Colonic mucosa (tissue), 4 donors: ENCODE measurements at regions of chr17 and their contacts with region 1.

Region 1: DNA sequence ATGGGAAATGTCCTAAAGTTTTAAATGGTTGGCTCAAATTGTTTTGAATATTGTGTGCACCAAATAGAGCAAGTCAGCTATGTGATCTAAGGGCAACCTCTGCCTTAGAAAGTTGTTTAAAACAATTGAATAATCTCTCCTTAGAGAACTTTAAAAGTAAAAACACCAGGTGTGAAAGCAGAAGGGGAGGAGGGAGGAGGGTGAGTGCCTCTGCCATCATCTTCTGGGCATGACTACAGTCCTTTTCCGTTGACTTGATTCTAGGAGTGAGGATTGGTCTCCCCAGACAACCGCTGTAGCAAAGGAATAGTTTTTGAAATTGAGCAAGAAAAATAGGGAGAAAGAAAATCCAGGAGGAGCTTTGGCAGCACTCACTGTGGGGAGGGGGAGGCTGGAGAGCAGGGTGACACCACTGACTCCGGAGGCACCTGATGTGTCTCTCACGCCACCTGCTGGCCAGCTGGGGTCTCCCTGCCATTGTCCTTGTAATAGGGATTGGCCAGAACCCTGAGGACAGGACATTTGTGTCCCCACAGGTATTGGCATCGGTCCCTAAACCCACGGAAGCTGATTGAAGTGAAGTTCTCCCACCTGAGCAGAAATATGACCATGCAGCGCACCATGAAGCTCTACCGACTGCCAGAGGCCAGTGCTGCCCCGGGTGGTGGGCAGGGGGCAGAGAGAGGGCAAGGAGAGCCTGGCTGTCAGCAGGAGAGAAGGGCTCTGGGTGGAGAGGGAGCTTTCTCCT is 33.3 kb downstream of the PLCD3 start:
- DNase-seq: peak; percentile 89
- H3K4me3 ChIP-seq: no peak overlapping the region
- H3K27ac ChIP-seq: no peak overlapping the region
- H3K4me1 ChIP-seq: no peaks in the 10 kb centered on the region
- H3K27me3 ChIP-seq: no peaks in the 10 kb centered on the region
- CTCF ChIP-seq: peak; percentile 85

Region 2: GRCh38 chr17:44919885-44920564 is 179.0 kb before region 1 on chr17:
- intact Hi-C with region 1: loop called (anchors 2 kb)
- DNase-seq: peak; percentile 74
- H3K4me3 ChIP-seq: no peak overlapping the region
- H3K27ac ChIP-seq: no peak overlapping the region
- H3K4me1 ChIP-seq: no peaks in the 10 kb centered on the region
- H3K27me3 ChIP-seq: no peaks in the 10 kb centered on the region
- CTCF ChIP-seq: peak; percentile 78

Region 3: GRCh38 chr17:45021607-45022287 is 77.3 kb before region 1 on chr17:
- intact Hi-C with region 1: loop called (anchors 5 kb)
- DNase-seq: peak; percentile 54
- H3K4me3 ChIP-seq: peak overlapping the region; percentile 38
- H3K27ac ChIP-seq: peak overlapping the region; percentile 35
- H3K4me1 ChIP-seq: peaks cover 3% of the 10 kb centered on the region
- H3K27me3 ChIP-seq: no peaks in the 10 kb centered on the region
- CTCF ChIP-seq: peak; percentile 92

Region 4: DNA sequence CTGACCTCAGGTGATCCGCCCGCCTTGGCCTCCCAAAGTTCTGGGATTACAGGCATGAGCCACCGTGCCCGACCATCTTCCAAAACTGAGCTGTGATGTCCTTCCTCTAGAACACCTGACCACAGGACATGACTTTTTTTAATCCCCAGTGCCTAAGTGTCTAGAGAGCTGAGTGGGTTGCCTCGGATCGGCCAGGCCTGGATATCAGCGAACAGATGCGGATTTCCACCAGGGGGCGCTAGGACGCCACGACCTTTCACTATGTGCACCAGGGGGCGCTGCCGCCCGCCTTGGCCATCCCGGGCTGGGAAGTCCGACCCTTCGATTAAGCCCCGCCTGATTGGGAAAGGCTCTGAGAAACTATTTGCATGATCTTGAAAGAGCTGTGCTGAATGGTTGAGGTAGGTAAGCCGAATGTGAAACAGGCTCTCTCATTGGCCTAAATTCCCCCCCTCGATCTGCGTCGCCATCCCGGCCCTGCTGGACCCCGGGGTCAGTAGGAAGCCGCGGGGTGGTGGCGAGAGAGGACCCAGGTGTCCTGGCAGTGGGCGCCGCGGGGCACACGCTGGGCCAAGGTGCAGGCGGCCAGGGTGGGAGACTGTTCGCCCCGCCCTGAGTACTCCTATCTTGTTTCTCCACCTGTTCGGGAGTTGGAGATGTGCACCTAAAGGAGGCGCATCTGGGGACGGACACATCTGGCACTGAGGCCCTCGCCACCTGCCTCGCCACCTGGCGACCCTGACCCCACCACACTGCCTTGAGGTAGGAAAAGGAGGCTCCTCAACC is 36.3 kb after region 1 on chr17 and contains the start of gene ACBD4:
- intact Hi-C with region 1: loop called (anchors 5 kb)
- DNase-seq: peak; percentile 97
- H3K4me3 ChIP-seq: peak within 1 kb of the TSS; percentile 82
- H3K27ac ChIP-seq: peak within 1 kb of the TSS; percentile 65
- H3K4me1 ChIP-seq: peaks cover 10% of the 10 kb centered on the region
- H3K27me3 ChIP-seq: no peaks in the 10 kb centered on the region
- CTCF ChIP-seq: peak; percentile 100
- total RNA-seq, gene ACBD4: 13.0 to 16.6 TPM

Region 5: GRCh38 chr17:45161019-45161825 is 62.2 kb after region 1 on chr17:
- intact Hi-C with region 1: no loop called
- DNase-seq: peak; percentile 99
- H3K4me3 ChIP-seq: peak overlapping the region; percentile 80
- H3K27ac ChIP-seq: peak overlapping the region; percentile 98
- H3K4me1 ChIP-seq: peaks cover 7% of the 10 kb centered on the region
- H3K27me3 ChIP-seq: no peaks in the 10 kb centered on the region
- CTCF ChIP-seq: no peak